ENCODE measurements at regions of chr6 and their contacts with region 1.

Region 1: DNA sequence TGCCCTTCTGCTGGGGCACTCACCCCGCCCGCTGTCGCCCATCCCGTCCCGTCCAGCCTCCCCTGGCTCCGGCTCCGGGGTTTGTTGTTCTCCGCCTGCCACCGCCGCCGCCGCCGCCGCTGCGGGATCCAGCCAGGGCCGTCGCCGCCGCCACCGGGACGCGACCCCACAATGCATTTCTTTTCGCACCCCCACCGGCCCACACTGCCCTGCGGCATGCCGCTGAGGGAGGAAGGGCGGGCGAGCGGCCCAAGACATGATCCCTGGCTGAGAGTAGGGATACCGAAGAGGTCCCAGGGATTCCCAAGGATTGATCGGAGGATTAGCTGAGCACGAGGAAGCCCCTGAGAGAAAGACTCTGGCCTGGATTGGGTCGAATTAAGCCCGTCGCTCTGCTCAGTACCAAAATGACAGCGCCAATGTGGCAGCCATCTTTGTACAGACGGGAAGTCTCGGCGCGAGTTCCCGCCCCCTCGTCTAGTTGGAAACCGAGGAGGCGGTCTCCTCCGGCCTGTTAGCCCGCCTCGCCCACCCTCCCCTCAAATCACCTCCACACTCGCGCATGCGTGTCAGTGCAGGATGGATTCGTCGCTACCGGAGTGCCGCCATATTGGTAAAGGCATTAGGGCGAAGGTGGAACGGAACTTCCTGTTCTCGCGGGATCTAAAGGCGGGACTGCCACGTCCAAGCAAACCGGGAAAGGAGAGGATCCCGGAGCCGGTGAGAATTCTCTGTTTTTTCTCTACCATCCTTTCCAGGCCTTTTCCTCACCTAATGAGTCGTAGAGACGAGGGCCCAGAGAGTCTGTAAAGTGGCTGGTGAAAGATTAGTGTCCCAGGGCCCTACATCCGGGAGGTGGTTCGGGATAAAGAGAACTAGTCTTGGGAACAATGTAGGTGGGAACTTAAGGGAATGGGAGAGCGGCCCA is at the starts of genes RXRB and SLC39A7:
- DNase-seq: peak; percentile 88 to 99 (median 97)
- ATAC-seq: peak; percentile 85
- H3K4me3 ChIP-seq: peak within 1 kb of the TSS; percentile 89
- H3K4me3 Mint-ChIP-seq: peak within 1 kb of the TSS; percentile 95 to 100 (median 99)
- H3K27ac ChIP-seq: peak within 1 kb of the TSS; percentile 96
- H3K27ac Mint-ChIP-seq: peak within 1 kb of the TSS; percentile 97 to 99 (median 99)
- H3K4me1 ChIP-seq: peaks cover 32 to 37% of the 10 kb centered on the region in 2 donors
- H3K4me1 Mint-ChIP-seq: peaks cover 62 to 84% (median 73%) of the 10 kb centered on the region in 7 donors
- H3K27me3 ChIP-seq: no peaks in the 10 kb centered on the region
- H3K27me3 Mint-ChIP-seq: no peaks in the 10 kb centered on the region
- total RNA-seq, gene RXRB: 50.3 to 103 (median 76.2) TPM
- total RNA-seq, gene SLC39A7: 19.1 to 51.9 (median 27.9) TPM

Region 2: DNA sequence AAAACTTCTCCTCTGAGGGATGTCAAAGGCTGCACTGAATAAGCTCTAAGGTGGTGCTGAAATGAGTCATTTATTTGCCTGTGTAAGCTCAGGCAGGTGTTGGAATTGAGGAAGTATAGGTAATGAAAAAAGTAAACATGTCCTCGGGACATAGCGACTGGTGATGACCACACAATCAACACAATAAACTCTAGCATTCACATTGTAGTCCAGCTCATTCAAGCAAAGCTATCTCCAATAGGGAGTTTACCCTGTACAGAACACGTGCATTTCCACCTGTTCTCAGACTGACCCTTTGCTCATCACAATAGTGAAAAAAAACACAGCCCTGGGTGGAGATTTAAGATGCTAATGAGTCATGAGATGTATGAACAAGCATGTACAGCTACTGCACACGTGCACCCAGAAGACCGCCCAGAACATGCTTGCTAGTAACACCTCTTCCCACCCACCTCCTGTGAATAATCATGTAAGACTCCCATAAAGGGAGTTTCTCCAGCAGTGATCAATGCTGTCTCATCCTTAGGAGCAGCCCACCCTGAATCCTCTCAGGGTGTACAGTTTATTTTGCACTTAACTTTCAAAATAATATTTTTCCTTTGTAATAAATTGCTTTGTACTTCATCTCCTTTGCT is 1997.0 kb before region 1 on chr6:
- CTCF ChIA-PET with region 1: no interaction called
- POLR2A ChIA-PET with region 1: no interaction called
- intact Hi-C with region 1: loop called in 1 of 2 experiments (anchors 10 kb)
- DNase-seq: peak in 3 of 9 donors; percentile 13 to 73 (median 55)
- ATAC-seq: peak; percentile 81
- H3K4me3 ChIP-seq: peak overlapping the region; percentile 67
- H3K4me3 Mint-ChIP-seq: peak overlapping the region; percentile 74 to 96 (median 89)
- H3K27ac ChIP-seq: peak overlapping the region; percentile 73
- H3K27ac Mint-ChIP-seq: peak overlapping the region; percentile 82 to 97 (median 96)
- H3K4me1 ChIP-seq: peaks cover 29 to 41% of the 10 kb centered on the region in 2 donors
- H3K4me1 Mint-ChIP-seq: peaks cover 49 to 73% (median 64%) of the 10 kb centered on the region in 7 donors
- H3K27me3 ChIP-seq: no peaks in the 10 kb centered on the region
- H3K27me3 Mint-ChIP-seq: no peaks in the 10 kb centered on the region

Region 3: GRCh38 chr6:32843979-32844838 is 356.3 kb before region 1 on chr6 and contains the start of gene PSMB8:
- CTCF ChIA-PET with region 1: no interaction called
- POLR2A ChIA-PET with region 1: no interaction called
- intact Hi-C with region 1: loop called in 1 of 2 experiments (anchors 5 kb)
- DNase-seq: peak; percentile 92 to 99 (median 97)
- ATAC-seq: peak; percentile 90
- H3K4me3 ChIP-seq: peak within 1 kb of the TSS; percentile 97
- H3K4me3 Mint-ChIP-seq: peak within 1 kb of the TSS; percentile 92 to 99 (median 98)
- H3K27ac ChIP-seq: peak within 1 kb of the TSS; percentile 97
- H3K27ac Mint-ChIP-seq: peak within 1 kb of the TSS; percentile 99 to 100 (median 100)
- H3K4me1 ChIP-seq: peaks cover 71 to 72% of the 10 kb centered on the region in 2 donors
- H3K4me1 Mint-ChIP-seq: peaks cover 66 to 83% (median 79%) of the 10 kb centered on the region in 7 donors
- H3K27me3 ChIP-seq: no peaks in the 10 kb centered on the region
- H3K27me3 Mint-ChIP-seq: no peaks in the 10 kb centered on the region
- total RNA-seq, gene PSMB8: 111 to 419 (median 115) TPM

Region 4: DNA sequence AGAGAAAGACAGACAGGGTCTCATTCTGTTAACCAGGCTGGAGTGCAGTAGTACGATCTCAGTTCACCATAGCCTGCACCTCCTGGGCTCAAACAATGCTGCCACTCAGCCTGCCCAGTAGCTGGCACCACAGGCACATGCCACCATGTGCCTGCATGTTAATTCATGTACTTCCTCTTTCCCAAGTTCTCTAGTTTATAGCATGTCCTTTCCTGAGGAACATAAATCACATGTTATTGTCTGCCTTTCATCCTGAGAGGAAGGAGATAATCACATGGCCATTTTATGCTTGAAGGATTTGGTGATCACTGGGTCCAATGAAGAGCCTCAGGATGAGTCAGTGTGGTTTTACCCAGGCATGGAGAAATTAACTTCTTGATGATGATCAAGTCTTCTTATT is 56.1 kb before region 1 on chr6:
- CTCF ChIA-PET with region 1: no interaction called
- POLR2A ChIA-PET with region 1: no interaction called
- intact Hi-C with region 1: no loop called
- DNase-seq: no peak
- ATAC-seq: peak; percentile 83
- H3K4me3 ChIP-seq: no peak overlapping the region
- H3K4me3 Mint-ChIP-seq: no peak overlapping the region
- H3K27ac ChIP-seq: no peak overlapping the region
- H3K27ac Mint-ChIP-seq: peak overlapping the region in 1 of 9 donors; percentile 50
- H3K4me1 ChIP-seq: no peaks in the 10 kb centered on the region
- H3K4me1 Mint-ChIP-seq: peaks cover 0 to 12% (median 0%) of the 10 kb centered on the region in 7 donors
- H3K27me3 ChIP-seq: peaks cover 0 to 4% of the 10 kb centered on the region in 2 donors
- H3K27me3 Mint-ChIP-seq: peaks cover 27 to 41% (median 33%) of the 10 kb centered on the region in 5 donors

Region 5: DNA sequence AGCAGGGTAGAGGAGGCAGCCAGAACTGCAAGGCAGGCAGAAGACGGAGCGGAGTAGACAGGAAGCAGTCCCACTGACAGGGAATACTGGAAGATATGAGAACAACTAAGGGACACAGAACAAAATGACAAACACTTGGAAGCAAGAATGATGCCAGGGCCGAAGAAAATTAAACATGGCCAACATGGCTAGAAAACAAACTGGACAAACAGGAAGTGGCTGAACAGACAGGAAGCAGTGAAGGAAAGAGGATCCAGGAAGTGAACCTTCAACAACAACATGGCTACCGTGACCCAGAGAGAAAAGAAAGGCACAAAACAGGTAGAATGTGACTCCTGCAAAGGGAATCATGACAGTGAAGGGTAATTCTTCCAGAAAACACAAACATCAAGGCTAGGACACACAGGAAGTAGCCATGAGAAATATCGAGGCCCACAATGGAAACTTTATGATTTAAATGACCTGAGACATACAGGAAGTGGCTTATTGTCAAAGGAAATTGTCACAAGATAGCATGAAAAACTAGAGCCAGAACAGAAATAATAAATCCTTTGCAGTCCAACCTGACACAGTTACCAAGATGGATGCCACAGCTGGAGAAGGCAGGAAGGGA is 17.3 kb before region 1 on chr6:
- CTCF ChIA-PET with region 1: interaction called, 7 read pairs
- POLR2A ChIA-PET with region 1: interaction called, 14 read pairs
- intact Hi-C with region 1: loop called (anchors 1 to 2 kb)
- DNase-seq: peak in 1 of 9 donors; percentile 23
- ATAC-seq: no peak
- H3K4me3 ChIP-seq: peak overlapping the region; percentile 31
- H3K4me3 Mint-ChIP-seq: peak overlapping the region; percentile 48 to 79 (median 66)
- H3K27ac ChIP-seq: no peak overlapping the region
- H3K27ac Mint-ChIP-seq: peak overlapping the region; percentile 52 to 94 (median 90)
- H3K4me1 ChIP-seq: peaks cover 16 to 23% of the 10 kb centered on the region in 2 donors
- H3K4me1 Mint-ChIP-seq: peaks cover 17 to 25% (median 24%) of the 10 kb centered on the region in 7 donors
- H3K27me3 ChIP-seq: no peaks in the 10 kb centered on the region
- H3K27me3 Mint-ChIP-seq: peaks cover 3 to 18% (median 10%) of the 10 kb centered on the region in 5 donors

Region 6: DNA sequence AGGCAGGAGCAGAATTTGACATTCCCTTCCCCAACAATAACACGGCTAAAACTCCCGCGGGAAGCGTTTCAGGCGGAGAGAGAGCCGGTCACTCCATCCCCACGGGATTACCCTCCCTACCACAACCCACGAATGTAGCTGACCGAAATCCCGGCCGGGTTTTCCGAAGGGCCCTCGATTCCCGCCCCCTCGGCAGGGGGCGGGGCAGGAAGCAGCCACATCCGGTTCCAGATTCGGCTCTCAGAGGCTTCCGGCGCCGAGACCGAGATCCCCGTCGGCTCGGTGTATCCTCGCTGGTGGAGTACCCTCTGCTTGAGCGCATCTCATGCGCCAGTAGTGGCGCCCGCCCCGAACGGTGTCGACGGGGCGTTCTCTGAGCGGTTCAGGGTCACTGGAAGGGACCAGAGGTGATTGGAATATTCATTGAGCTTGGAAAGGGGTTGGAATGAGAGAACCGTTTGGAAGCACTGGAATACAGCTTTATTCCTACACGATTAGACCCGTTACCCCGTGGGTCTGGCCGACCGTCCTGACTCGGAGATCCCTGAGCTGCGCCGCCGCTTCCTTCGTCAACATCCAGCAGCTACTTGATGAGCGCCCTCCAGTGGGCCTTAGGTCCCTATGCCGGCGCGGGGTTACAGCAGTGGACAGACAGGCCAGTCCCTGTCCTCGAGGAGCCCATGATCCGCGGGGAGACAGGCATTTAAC is 98.9 kb after region 1 on chr6:
- CTCF ChIA-PET with region 1: interaction called, 3 read pairs
- POLR2A ChIA-PET with region 1: interaction called, 3 read pairs
- intact Hi-C with region 1: loop called in 1 of 2 experiments (anchors 1 kb)
- DNase-seq: peak; percentile 89 to 96 (median 93)
- ATAC-seq: peak; percentile 88
- H3K4me3 ChIP-seq: peak overlapping the region; percentile 78
- H3K4me3 Mint-ChIP-seq: peak overlapping the region; percentile 95 to 100 (median 99)
- H3K27ac ChIP-seq: peak overlapping the region; percentile 92
- H3K27ac Mint-ChIP-seq: peak overlapping the region; percentile 95 to 100 (median 99)
- H3K4me1 ChIP-seq: peaks cover 5 to 10% of the 10 kb centered on the region in 2 donors
- H3K4me1 Mint-ChIP-seq: peaks cover 25 to 48% (median 38%) of the 10 kb centered on the region in 7 donors
- H3K27me3 ChIP-seq: no peaks in the 10 kb centered on the region
- H3K27me3 Mint-ChIP-seq: peaks cover 0 to 3% (median 0%) of the 10 kb centered on the region in 5 donors

Region 7: DNA sequence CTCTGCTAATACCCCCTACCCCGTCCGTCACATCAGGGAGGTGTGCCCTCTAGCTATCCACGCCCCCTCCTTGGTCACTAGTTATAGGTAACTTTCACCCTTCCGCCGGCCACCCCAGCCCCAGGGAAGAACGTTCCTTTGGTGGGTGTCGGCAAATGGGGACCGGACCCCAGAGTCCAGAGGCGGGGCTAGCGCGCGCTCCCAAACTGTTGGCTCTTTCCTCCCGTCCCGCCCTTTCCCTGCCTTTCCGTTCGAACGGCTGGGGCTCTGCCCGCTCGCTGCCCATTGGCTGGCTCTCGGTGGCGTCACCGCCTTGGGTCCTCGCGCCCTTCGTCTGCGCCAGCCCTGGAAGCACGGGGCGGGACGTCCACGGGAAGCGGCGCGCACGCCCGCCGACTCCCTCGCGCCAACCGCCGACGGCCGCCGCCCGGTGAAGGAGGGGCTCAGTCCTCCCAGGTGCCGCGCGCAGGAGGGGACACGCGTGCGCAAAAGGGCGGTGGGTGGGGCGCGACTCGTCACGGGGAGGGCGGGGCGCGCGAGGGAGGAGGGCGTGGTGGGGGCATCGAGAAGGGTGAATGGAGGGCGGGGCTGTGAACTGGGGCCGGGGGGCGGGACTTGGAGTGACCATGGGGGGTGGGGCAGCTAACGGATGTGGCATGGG is 209.7 kb after region 1 on chr6:
- CTCF ChIA-PET with region 1: no interaction called
- POLR2A ChIA-PET with region 1: no interaction called
- intact Hi-C with region 1: loop called (anchors 1 kb)
- DNase-seq: peak; percentile 94 to 98 (median 95)
- ATAC-seq: peak; percentile 82
- H3K4me3 ChIP-seq: peak overlapping the region; percentile 78
- H3K4me3 Mint-ChIP-seq: peak overlapping the region; percentile 85 to 95 (median 90)
- H3K27ac ChIP-seq: peak overlapping the region; percentile 100
- H3K27ac Mint-ChIP-seq: peak overlapping the region; percentile 65 to 99 (median 97)
- H3K4me1 ChIP-seq: peaks cover 35 to 36% of the 10 kb centered on the region in 2 donors
- H3K4me1 Mint-ChIP-seq: peaks cover 25 to 60% (median 46%) of the 10 kb centered on the region in 7 donors
- H3K27me3 ChIP-seq: no peaks in the 10 kb centered on the region
- H3K27me3 Mint-ChIP-seq: no peaks in the 10 kb centered on the region

Region 8: GRCh38 chr6:33467091-33467490 is 266.6 kb after region 1 on chr6:
- CTCF ChIA-PET with region 1: no interaction called
- POLR2A ChIA-PET with region 1: no interaction called
- intact Hi-C with region 1: no loop called
- DNase-seq: no peak
- ATAC-seq: no peak
- H3K4me3 ChIP-seq: no peak overlapping the region
- H3K4me3 Mint-ChIP-seq: no peak overlapping the region
- H3K27ac ChIP-seq: no peak overlapping the region
- H3K27ac Mint-ChIP-seq: no peak overlapping the region
- H3K4me1 ChIP-seq: no peaks in the 10 kb centered on the region
- H3K4me1 Mint-ChIP-seq: peaks cover 0 to 4% (median 0%) of the 10 kb centered on the region in 7 donors
- H3K27me3 ChIP-seq: no peaks in the 10 kb centered on the region
- H3K27me3 Mint-ChIP-seq: peaks cover 0 to 12% (median 0%) of the 10 kb centered on the region in 5 donors

Region 9: DNA sequence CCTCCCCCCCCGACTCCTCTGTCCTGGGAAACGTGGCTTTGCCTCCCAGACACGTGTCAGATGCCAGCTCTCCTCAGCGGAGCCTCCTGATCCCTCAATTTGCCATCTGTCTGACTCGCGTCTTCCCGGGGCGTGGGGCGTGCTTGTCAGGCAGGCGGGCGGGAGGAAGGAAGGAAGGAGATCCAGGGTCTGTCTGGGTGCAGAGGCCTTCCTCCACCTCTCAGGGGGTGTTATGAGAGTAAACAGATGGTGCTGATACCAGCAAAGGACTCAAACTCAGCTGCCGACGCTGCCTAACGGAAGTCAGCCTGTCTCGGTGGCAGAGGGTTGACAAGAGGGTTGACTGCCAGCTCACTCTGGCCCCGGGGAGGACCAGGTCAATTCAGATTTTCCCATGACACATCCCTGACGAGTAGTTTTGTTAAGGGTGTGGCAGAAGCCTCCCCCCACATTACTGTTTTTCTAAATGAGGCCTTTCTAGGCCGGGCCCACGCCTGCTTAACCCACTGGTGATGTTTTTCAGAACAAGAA is 494.0 kb after region 1 on chr6:
- CTCF ChIA-PET with region 1: interaction called, 3 read pairs
- POLR2A ChIA-PET with region 1: no interaction called
- intact Hi-C with region 1: loop called in 1 of 2 experiments (anchors 5 kb)
- DNase-seq: peak; percentile 28 to 70 (median 64)
- ATAC-seq: peak; percentile 68
- H3K4me3 ChIP-seq: no peak overlapping the region
- H3K4me3 Mint-ChIP-seq: peak overlapping the region; percentile 66 to 86 (median 78)
- H3K27ac ChIP-seq: peak overlapping the region; percentile 80
- H3K27ac Mint-ChIP-seq: peak overlapping the region; percentile 88 to 100 (median 96)
- H3K4me1 ChIP-seq: peaks cover 58 to 74% of the 10 kb centered on the region in 2 donors
- H3K4me1 Mint-ChIP-seq: peaks cover 33 to 85% (median 74%) of the 10 kb centered on the region in 7 donors
- H3K27me3 ChIP-seq: no peaks in the 10 kb centered on the region
- H3K27me3 Mint-ChIP-seq: no peaks in the 10 kb centered on the region

Region 10: DNA sequence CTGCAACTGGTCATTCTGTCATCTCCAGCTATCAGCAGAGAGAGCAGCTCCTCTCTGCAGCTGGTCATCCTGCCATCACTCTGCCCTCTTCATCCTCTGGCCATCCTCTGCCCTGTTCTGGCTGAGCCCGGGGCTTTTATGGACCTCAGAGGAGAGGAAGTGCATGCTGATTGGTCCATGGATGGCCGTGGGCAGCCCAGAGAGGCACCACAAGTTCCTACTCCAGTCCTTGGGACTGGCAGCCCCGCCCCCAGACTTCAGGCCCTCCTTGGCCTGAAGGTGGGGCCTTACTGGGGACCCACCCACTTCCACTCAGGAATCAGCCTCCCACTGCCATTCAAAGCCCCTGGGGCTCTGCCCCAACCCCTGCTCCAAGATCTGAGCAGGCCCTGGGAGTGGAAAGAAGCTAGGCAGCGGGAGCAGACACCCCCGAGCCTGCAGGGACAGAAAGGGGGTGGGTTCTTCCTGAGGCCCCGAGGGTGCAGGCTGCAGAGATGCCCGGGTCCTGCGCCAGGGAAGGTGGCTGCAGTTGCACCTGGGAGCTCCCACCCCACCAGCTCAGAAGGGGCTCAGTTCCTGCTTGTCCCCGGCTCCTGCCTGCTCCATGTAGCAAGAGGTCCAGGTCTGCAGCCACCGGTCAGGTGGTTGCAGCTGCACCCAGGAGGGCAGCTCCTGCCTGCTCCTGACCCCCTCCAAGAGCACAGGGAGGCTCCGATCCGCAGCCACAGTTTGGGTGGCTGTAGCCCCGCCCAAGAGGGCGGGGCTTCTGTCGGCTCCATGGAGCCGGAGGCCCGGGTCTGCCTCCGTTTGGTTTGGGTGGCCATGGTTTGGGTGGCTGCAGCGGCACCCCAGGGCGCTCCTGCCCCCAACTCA is 1002.1 kb after region 1 on chr6:
- CTCF ChIA-PET with region 1: no interaction called
- POLR2A ChIA-PET with region 1: no interaction called
- intact Hi-C with region 1: no loop called
- DNase-seq: no peak
- ATAC-seq: no peak
- H3K4me3 ChIP-seq: no peak overlapping the region
- H3K4me3 Mint-ChIP-seq: no peak overlapping the region
- H3K27ac ChIP-seq: no peak overlapping the region
- H3K27ac Mint-ChIP-seq: no peak overlapping the region
- H3K4me1 ChIP-seq: no peaks in the 10 kb centered on the region
- H3K4me1 Mint-ChIP-seq: peaks cover 0 to 2% (median 0%) of the 10 kb centered on the region in 7 donors
- H3K27me3 ChIP-seq: no peaks in the 10 kb centered on the region
- H3K27me3 Mint-ChIP-seq: peaks cover 0 to 8% (median 0%) of the 10 kb centered on the region in 5 donors

Measured in naive thymus-derived CD4-positive, alpha-beta T cell (primary cell).